ENCODE measurements at regions of chr7 and their contacts with region 1.

Region 1: GRCh38 chr7:155205368-155206317 is 92.0 kb upstream of the INSIG1 start:
- DNase-seq: no peak
- ATAC-seq: no peak
- H3K4me3 ChIP-seq: no peak overlapping the region
- H3K27ac ChIP-seq: no peak overlapping the region
- H3K4me1 ChIP-seq: no peaks in the 10 kb centered on the region
- H3K27me3 ChIP-seq: peaks cover 0 to 23% of the 10 kb centered on the region in 2 experiments; a peak in 3 of 5 replicates
- CTCF ChIP-seq: no peak
- EP300 ChIP-seq: no peak
- POLR2A ChIP-seq: no peak
- RAD21 ChIP-seq: no peak

Region 2: DNA sequence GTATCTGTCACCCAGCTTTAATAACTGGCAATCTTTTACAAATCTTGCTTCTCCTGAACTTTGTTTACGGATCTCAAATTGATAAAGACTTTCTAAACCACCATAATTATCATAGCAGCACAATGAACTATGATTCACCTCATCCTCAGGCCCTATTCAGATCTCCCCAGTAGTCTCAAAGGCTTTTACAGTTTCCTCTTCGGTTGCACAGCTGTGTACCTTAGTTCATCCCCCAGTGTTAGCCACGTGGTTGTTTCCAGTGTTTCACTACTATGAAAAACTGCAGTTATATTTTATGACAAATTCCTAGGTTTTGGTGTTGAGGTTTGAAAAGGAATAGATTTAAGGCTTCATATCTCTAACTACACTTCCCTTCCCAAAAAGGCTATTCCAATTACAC is 227.6 kb before region 1 on chr7:
- CTCF ChIA-PET with region 1: no interaction called
- POLR2A ChIA-PET with region 1: no interaction called
- in situ Hi-C with region 1: no loop called
- intact Hi-C with region 1: no loop called
- DNase-seq: no peak
- ATAC-seq: no peak
- H3K4me3 ChIP-seq: no peak overlapping the region
- H3K27ac ChIP-seq: no peak overlapping the region
- H3K4me1 ChIP-seq: no peaks in the 10 kb centered on the region
- H3K27me3 ChIP-seq: no peaks in the 10 kb centered on the region
- CTCF ChIP-seq: no peak
- EP300 ChIP-seq: no peak
- POLR2A ChIP-seq: no peak
- RAD21 ChIP-seq: no peak

Region 3: GRCh38 chr7:155124477-155125127 is 81.0 kb before region 1 on chr7:
- CTCF ChIA-PET with region 1: no interaction called
- POLR2A ChIA-PET with region 1: no interaction called
- in situ Hi-C with region 1: no loop called
- intact Hi-C with region 1: no loop called
- DNase-seq: no peak
- ATAC-seq: no peak
- H3K4me3 ChIP-seq: no peak overlapping the region
- H3K27ac ChIP-seq: no peak overlapping the region
- H3K4me1 ChIP-seq: no peaks in the 10 kb centered on the region
- H3K27me3 ChIP-seq: no peaks in the 10 kb centered on the region
- CTCF ChIP-seq: no peak
- EP300 ChIP-seq: no peak
- POLR2A ChIP-seq: no peak
- RAD21 ChIP-seq: no peak

Region 4: GRCh38 chr7:155145477-155146255 is 60.0 kb before region 1 on chr7:
- CTCF ChIA-PET with region 1: no interaction called
- POLR2A ChIA-PET with region 1: no interaction called
- in situ Hi-C with region 1: no loop called
- intact Hi-C with region 1: loop called (anchors 2 kb)
- DNase-seq: no peak
- ATAC-seq: no peak
- H3K4me3 ChIP-seq: no peak overlapping the region
- H3K27ac ChIP-seq: no peak overlapping the region
- H3K4me1 ChIP-seq: no peaks in the 10 kb centered on the region
- H3K27me3 ChIP-seq: peaks cover 0 to 21% of the 10 kb centered on the region in 2 experiments; a peak in 3 of 5 replicates
- CTCF ChIP-seq: no peak
- EP300 ChIP-seq: no peak
- POLR2A ChIP-seq: no peak
- RAD21 ChIP-seq: no peak

Measured in HepG2 (cell line).